ENCODE measurements at regions of chr18 and their contacts with region 1.

Region 1: DNA sequence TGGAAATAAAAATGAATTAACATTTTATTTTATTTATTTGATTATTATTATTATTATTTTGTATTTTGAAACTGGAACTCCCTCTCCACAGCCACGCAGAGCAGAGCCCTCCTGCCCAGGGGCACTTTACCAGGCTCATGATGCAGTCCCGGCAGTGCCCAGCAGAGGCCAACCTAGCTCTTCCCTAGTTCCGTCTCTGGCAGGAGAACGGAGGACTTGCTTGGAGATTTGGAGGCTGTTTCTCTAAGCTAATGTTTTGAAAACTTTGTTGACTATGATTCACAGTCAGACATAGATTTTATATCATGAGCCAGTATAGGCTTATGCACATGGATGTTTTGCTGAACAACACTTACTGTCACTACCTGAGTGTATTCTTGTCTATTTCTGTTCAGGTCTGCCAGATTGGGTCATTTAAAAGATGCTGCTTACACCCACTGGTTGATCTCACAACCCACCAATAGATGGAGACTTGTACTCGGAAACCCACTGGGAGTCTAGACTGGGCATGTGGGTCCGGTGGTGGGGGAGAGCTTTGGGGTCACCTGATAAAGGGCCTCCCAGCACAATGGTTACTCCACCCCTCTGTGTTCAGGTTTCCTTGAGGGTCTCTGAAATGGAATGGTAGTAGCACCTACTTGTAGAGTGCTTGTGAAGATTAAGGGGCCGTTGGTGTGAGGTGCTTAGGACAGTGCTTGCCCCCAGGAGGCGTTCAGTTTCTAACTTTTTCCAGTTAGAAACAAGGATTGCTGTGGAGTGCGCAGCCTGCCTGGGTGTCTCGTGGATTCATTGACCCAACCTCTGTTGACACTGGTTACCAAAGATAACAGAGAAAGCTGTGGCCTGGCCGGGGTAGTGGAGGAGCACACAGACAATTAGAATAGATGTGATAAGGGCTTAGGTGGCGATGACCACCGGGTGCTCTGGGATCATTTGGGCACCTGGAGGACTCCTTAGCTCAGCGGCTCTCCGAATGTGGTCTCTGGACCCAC is 177.3 kb downstream of the HAUS1 start:
- DNase-seq: peak; percentile 43
- H3K27ac ChIP-seq: no peak overlapping the region; the same call in 1 of the 2 replicates
- CTCF ChIP-seq: peak; percentile 92

Region 2: DNA sequence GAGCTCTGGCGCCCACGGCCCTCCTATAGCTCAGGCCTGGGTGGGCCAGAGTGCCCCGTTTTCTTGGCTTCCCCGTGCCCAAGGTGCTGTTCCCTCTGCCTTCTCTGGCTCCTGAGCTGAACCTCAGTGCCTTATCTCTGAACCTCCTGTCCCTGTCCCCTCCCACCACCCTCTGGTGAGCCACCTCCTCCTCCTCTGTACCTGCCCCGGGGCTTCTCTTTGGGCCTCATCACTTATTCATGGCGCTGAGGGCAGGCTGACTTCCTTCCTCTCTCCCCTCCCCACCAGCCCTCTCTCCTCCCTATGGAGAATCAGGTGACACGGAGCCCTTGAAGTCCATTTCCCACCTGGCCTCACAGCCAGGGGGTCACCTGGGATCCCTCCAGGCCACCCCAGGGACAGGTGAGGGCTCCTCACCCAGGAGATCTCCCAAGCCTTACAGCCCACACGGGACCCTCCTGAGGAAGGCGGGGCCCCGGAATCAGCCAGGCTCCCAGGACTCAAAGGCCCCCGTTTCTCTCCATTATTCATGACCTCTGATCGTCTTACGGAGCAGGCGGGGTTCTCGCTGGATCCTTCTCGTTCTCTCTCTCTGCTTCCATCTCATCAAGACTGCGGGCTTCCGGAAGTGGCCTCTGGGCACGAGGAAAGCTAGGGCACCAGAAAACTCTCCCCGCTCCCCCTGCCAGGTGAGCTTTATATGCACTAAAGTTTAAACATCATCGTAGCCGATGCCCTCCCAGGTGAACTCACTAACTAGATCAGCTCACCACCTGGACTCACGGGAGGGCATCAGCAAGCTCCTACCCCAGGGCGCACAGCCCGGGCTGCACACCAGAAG is 375.9 kb after region 1 on chr18 and contains the start of gene LOXHD1:
- CTCF ChIA-PET with region 1: interaction called, 11 read pairs
- POLR2A ChIA-PET with region 1: interaction called, 3 read pairs
- DNase-seq: no peak
- H3K27ac ChIP-seq: no peak within 1 kb of the TSS
- CTCF ChIP-seq: no peak

Measured in RWPE1 (cell line).